ENCODE measurements at regions of chr12 and their contacts with region 1.

Region 1: GRCh38 chr12:111599459-111600204 is 517 bp upstream of the ATXN2 start:
- DNase-seq: peak; percentile 98
- H3K4me3 ChIP-seq: peak overlapping the region; percentile 91 to 99 (median 97)
- H3K27ac ChIP-seq: peak overlapping the region; percentile 96 to 98 (median 97)
- H3K4me1 ChIP-seq: peaks cover 33 to 38% (median 38%) of the 10 kb centered on the region in 4 donors
- H3K27me3 ChIP-seq: no peaks in the 10 kb centered on the region
- CTCF ChIP-seq: no peak
- EP300 ChIP-seq: no peak
- POLR2A ChIP-seq: peak; percentile 82

Region 2: GRCh38 chr12:111557271-111558106 is 42.1 kb before region 1 on chr12:
- intact Hi-C with region 1: loop called (anchors 5 kb)
- DNase-seq: no peak
- H3K4me3 ChIP-seq: no peak overlapping the region
- H3K27ac ChIP-seq: peak overlapping the region in 3 of 4 donors; percentile 16 to 42 (median 30)
- H3K4me1 ChIP-seq: peaks cover 28 to 71% (median 62%) of the 10 kb centered on the region in 4 donors
- H3K27me3 ChIP-seq: no peaks in the 10 kb centered on the region
- CTCF ChIP-seq: no peak
- EP300 ChIP-seq: no peak
- POLR2A ChIP-seq: no peak

Region 3: GRCh38 chr12:111741235-111741812 is 141.7 kb after region 1 on chr12:
- intact Hi-C with region 1: no loop called
- DNase-seq: no peak
- H3K4me3 ChIP-seq: no peak overlapping the region
- H3K27ac ChIP-seq: peak overlapping the region; percentile 62 to 71 (median 66)
- H3K4me1 ChIP-seq: peaks cover 7 to 27% (median 21%) of the 10 kb centered on the region in 4 donors
- H3K27me3 ChIP-seq: no peaks in the 10 kb centered on the region
- CTCF ChIP-seq: no peak
- EP300 ChIP-seq: no peak
- POLR2A ChIP-seq: no peak